H1 (cell line): ENCODE measurements at regions of chr19 and their contacts with region 1.

Region 1: DNA sequence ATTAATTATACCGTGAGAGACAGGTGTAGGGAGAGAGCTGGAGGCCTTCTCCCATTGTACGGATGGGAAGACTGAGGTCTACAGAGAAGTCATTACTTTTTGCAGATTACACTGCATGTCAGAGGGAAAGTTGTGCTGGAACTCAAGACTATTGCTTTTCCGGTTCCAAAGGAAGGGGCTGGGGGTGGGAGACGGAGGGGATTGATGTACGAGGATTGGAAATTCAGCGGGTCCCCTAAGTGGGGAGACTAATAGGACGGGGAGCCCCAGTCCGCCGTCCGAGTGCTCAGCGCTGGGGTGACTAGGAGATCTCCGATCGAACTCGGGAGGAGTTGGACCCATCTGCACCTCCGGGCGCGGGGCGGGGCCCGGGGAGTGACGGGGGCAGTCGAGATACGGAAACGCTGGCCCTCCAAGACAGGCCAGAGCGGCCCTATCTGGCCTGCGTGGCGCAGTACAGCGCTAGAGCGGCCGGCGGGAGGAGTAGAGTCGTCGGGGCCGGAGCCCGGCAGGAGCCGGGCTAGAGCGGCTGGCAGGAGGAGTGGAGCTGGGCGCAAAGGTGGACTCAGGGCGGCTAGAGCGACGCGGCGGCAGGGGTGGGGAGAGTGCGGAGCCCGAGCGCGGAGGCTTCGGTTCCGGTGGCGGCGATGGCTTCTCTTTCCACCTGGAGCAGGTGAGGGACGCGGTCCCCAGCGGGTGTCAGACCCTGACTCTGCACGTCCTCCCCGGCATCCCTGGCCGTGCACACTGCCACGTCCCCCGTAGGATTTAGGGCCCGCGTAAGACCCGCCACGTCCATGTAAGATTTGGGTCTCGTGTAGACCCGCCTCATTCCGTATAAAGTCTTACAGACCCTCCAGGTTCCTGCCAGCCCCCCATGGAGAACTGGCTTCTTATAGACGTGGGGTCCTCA is 1.1 kb downstream of the ARHGEF1 start:
- DNase-seq: peak; percentile 90 to 95
- H3K4me3 ChIP-seq: peak overlapping the region; percentile 81 to 97 (median 91)
- H3K27ac ChIP-seq: no peak overlapping the region
- H3K4me1 ChIP-seq: peaks cover 3 to 21% (median 12%) of the 10 kb centered on the region in 4 experiments
- H3K27me3 ChIP-seq: peaks cover 1 to 18% (median 17%) of the 10 kb centered on the region in 4 experiments; a peak in 6 of 7 replicates
- CTCF ChIP-seq: no peak; a peak in 1 of 4 replicates
- EP300 ChIP-seq: peak in 1 of 2 experiments; percentile 85; a peak in 1 of 3 replicates
- POLR2A ChIP-seq: peak in 1 of 2 experiments; percentile 76; a peak in 2 of 3 replicates
- RAD21 ChIP-seq: peak in 1 of 2 experiments; percentile 12; a peak in 1 of 4 replicates

Region 2: GRCh38 chr19:41859618-41860418 is 24.3 kb before region 1 on chr19 and contains the start of gene RPS19:
- CTCF ChIA-PET with region 1: interaction called, 5 read pairs
- POLR2A ChIA-PET with region 1: interaction called, 298 read pairs
- DNase-seq: peak; percentile 98 to 99
- H3K4me3 ChIP-seq: peak within 1 kb of the TSS; percentile 81 to 99 (median 96)
- H3K27ac ChIP-seq: peak within 1 kb of the TSS; percentile 95
- H3K4me1 ChIP-seq: peaks cover 3 to 26% (median 14%) of the 10 kb centered on the region in 4 experiments
- H3K27me3 ChIP-seq: no peaks in the 10 kb centered on the region
- CTCF ChIP-seq: peak; percentile 45 to 76 (median 54)
- EP300 ChIP-seq: no peak
- POLR2A ChIP-seq: peak; percentile 92 to 96
- RAD21 ChIP-seq: no peak
- total RNA-seq, gene RPS19: 2,817 and 2,831 TPM in 2 replicates